ENCODE measurements at regions of chr19 and their contacts with region 1.

Region 1: GRCh38 chr19:29610563-29611271 is 4.6 kb downstream of the POP4 start:
- DNase-seq: peak; percentile 20
- H3K4me3 ChIP-seq: no peak overlapping the region
- H3K27ac ChIP-seq: no peak overlapping the region
- H3K4me1 ChIP-seq: peaks cover 7 to 21% (median 9%) of the 10 kb centered on the region in 3 donors
- H3K27me3 ChIP-seq: no peaks in the 10 kb centered on the region
- CTCF ChIP-seq: peak; percentile 69 to 87 (median 84)
- POLR2A ChIP-seq: no peak

Region 2: DNA sequence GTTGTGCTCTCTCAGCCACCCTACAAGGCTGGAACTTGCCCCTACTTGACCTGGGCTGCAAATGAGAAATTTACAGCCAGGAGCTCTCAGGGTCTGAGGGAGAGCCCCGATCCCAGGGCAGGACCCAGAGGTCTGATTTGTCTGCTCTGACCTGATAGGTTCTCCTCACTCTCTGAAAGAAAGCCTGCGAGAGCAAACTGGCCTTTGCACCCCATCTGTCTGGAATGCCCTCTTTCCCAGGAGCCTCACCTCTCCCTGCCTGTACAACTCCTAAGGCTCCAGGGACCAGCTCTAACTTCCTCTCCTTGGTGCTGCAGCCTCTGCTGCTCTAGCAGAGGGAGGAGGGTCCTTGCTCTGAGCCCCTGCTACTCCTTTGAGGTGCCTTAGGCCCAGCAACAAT is 535.6 kb before region 1 on chr19:
- intact Hi-C with region 1: no loop called
- DNase-seq: no peak
- H3K4me3 ChIP-seq: no peak overlapping the region
- H3K27ac ChIP-seq: no peak overlapping the region
- H3K4me1 ChIP-seq: no peaks in the 10 kb centered on the region
- H3K27me3 ChIP-seq: no peaks in the 10 kb centered on the region
- CTCF ChIP-seq: no peak
- POLR2A ChIP-seq: no peak

Region 3: GRCh38 chr19:29694669-29695627 is 84.2 kb after region 1 on chr19:
- intact Hi-C with region 1: loop called (anchors 10 kb)
- DNase-seq: no peak
- H3K4me3 ChIP-seq: no peak overlapping the region
- H3K27ac ChIP-seq: peak overlapping the region in 1 of 4 donors; percentile 52
- H3K4me1 ChIP-seq: peaks cover 0 to 12% (median 4%) of the 10 kb centered on the region in 3 donors
- H3K27me3 ChIP-seq: no peaks in the 10 kb centered on the region
- CTCF ChIP-seq: peak; percentile 73 to 82 (median 78)
- POLR2A ChIP-seq: no peak

Region 4: DNA sequence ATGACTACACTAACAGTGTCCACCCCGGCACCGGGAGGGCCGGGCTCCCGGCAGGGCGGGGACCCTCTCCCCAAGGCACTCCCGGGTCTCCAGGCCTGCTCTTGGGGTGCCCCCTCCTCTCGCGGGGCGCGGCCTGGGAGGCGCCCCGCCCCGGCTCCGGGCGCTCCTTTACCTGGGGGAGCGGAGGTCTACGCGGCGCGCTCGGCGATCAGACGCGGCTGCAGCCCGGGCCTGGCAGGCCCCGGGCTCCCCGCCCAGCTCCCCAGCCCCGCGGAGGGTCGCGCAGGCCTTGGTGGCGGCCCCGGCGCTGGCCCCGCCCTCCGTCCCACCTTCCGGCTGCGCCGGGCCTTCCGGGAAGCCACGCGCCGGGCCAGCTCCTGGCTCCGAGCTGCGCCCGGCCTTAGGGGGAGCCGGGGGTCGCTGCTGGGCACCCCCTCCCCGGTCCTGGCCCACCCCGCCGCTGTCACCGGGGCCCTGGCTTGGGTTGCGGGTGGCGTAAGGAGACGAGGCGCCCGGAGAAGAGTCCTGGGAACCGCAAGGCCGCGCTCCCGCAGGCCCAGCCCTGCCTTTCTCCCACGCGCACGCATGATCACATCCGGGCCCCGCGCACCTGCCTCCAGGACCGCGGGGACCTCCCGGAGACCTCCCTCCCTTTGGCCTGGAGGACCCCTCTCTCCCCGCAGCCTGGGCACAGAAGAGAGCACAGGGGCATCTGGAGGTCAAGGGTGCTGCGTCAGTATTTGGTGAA is 104.4 kb after region 1 on chr19 and contains the start of gene C19orf12:
- intact Hi-C with region 1: loop called (anchors 5 kb)
- DNase-seq: no peak
- H3K4me3 ChIP-seq: peak within 1 kb of the TSS; percentile 79 to 98 (median 88)
- H3K27ac ChIP-seq: peak within 1 kb of the TSS; percentile 93 to 98 (median 96)
- H3K4me1 ChIP-seq: peaks cover 21 to 57% (median 23%) of the 10 kb centered on the region in 3 donors
- H3K27me3 ChIP-seq: no peaks in the 10 kb centered on the region
- CTCF ChIP-seq: no peak
- POLR2A ChIP-seq: peak in 3 of 4 donors; percentile 25 to 81 (median 78)
- total RNA-seq, gene C19orf12: 11.2 to 21.6 (median 18.3) TPM